Ovary (tissue), 10 donors: ENCODE measurements at regions of chr4 and their contacts with region 1.

Region 1: GRCh38 chr4:9762823-9763475 is 18.5 kb upstream of the DRD5 start:
- DNase-seq: peak; percentile 49 to 68 (median 52)
- H3K4me3 ChIP-seq: no peak overlapping the region
- H3K27ac ChIP-seq: no peak overlapping the region
- H3K4me1 ChIP-seq: no peaks in the 10 kb centered on the region
- H3K27me3 ChIP-seq: peaks cover 2% of the 10 kb centered on the region
- CTCF ChIP-seq: peak in 2 of 3 donors; percentile 50 to 76
- EP300 ChIP-seq: no peak
- POLR2A ChIP-seq: no peak

Region 2: GRCh38 chr4:10013722-10014121 is 250.8 kb after region 1 on chr4:
- intact Hi-C with region 1: loop called (anchors 5 to 10 kb)
- DNase-seq: no peak
- H3K4me3 ChIP-seq: no peak overlapping the region
- H3K27ac ChIP-seq: no peak overlapping the region
- H3K4me1 ChIP-seq: no peaks in the 10 kb centered on the region
- H3K27me3 ChIP-seq: no peaks in the 10 kb centered on the region
- CTCF ChIP-seq: no peak
- EP300 ChIP-seq: no peak
- POLR2A ChIP-seq: no peak

Region 3: DNA sequence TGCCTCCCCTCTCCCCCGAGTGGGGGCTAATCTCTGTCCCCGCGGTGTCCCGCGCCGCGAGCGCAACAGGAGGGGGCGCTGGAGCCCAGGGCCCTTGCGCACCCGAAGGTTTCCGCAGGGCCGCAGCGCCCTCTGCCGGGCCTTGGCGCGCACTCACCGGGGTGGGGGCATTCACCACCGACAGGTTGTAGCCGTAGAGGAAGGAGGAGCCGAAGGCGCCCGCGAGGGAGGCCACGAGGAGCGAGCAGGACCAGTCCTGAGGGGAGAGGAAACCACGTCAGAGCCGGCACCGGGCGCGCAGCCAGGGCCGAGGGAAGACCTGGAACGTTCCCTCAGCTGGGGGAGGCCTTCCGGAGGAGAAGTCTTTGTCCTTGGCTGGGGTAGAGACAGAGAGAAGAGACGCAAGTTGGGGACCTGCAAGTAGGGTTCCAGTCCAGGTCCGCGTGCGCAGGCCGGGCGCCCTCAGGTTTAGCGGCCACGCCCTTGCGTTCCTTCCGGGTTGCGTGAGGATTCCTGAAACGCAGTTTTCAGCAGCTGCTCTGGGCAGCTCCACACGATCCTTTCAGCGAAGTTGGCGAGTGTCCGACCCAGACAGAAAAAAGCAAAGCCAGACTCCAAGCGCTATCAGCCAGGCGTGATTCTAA is 256.0 kb after region 1 on chr4:
- intact Hi-C with region 1: loop called (anchors 5 to 10 kb)
- DNase-seq: peak; percentile 99 to 100 (median 99)
- H3K4me3 ChIP-seq: peak overlapping the region; percentile 44
- H3K27ac ChIP-seq: peak overlapping the region; percentile 82 to 90
- H3K4me1 ChIP-seq: peaks cover 4% of the 10 kb centered on the region
- H3K27me3 ChIP-seq: no peaks in the 10 kb centered on the region
- CTCF ChIP-seq: peak; percentile 99 to 100 (median 99)
- EP300 ChIP-seq: no peak
- POLR2A ChIP-seq: peak; percentile 56

Region 4: DNA sequence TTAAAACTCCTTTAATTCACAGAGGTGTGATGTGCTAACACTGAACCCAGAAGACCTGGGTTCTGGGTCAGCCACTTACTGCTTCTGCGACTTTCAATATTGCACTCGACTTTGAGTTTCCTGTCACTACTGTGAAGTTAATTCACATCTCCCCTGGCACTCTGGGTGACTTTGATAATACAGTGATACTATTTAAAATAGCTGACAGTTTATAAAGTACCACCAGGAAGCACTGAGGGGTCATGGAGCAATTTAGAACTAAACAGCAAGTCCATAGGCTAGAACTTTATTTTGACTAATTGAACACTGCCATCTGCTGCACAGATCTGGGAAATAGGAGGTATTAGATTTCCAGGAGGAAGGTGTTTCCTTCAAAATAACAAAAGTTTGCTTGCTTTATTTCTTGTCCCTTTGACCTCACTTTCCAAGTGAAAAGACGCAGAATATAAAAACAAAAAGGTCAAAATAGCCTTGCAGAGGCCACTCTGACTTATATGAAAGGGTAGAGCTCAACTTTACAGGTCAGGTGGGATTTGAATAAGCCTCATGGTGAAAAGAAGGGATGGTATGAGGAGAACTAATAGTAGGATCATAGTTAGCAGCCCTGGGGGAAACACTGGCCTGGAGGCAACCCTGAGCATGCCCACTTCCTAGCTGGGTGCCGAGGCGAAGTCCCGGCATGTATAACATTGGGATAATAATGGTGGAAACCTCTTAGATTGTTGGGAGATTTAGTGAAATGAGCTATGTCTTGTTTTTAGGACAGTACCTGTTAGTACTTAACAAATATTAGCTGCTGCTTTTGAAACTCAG is 640.9 kb after region 1 on chr4:
- intact Hi-C with region 1: loop called in 1 of 4 experiments (anchors 10 kb)
- DNase-seq: no peak
- H3K4me3 ChIP-seq: no peak overlapping the region
- H3K27ac ChIP-seq: no peak overlapping the region
- H3K4me1 ChIP-seq: no peaks in the 10 kb centered on the region
- H3K27me3 ChIP-seq: no peaks in the 10 kb centered on the region
- CTCF ChIP-seq: peak in 1 of 3 donors; percentile 16
- EP300 ChIP-seq: no peak
- POLR2A ChIP-seq: no peak

Region 5: DNA sequence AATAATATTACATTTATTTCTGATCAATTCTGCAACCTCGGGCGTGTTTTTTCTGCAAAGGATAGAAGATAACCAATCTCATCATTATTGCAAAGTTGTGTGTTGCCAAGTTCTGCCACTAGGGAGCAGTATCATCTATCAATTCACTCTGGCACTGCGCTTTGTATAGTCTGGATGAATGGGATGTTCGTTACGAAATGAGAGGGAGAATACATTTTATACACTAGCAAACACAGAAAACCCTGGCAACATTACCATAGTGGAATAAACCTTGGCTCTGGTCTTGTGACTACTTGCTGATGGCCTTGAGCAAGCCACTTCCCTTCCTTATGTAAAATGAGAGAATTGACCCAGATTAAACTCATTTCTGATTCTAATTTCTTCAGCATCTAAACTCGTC is 791.7 kb after region 1 on chr4:
- intact Hi-C with region 1: loop called in 1 of 4 experiments (anchors 10 kb)
- DNase-seq: peak in 4 of 5 donors; percentile 28 to 54 (median 38)
- H3K4me3 ChIP-seq: no peak overlapping the region
- H3K27ac ChIP-seq: no peak overlapping the region
- H3K4me1 ChIP-seq: no peaks in the 10 kb centered on the region
- H3K27me3 ChIP-seq: no peaks in the 10 kb centered on the region
- CTCF ChIP-seq: peak in 2 of 3 donors; percentile 46 to 64
- EP300 ChIP-seq: no peak
- POLR2A ChIP-seq: no peak